ENCODE measurements at regions of chr15 and their contacts with region 1.

Region 1: GRCh38 chr15:67074886-67075229 is 9.5 kb downstream of the SMAD3 start:
- DNase-seq: no peak
- ATAC-seq: no peak
- H3K4me3 ChIP-seq: no peak overlapping the region
- H3K27ac ChIP-seq: peak overlapping the region; percentile 36; the same call in 1 of the 2 replicates
- H3K4me1 ChIP-seq: peaks cover 80% of the 10 kb centered on the region
- H3K27me3 ChIP-seq: no peaks in the 10 kb centered on the region
- CTCF ChIP-seq: no peak

Region 2: GRCh38 chr15:67175643-67176071 is 100.8 kb after region 1 on chr15:
- CTCF ChIA-PET with region 1: no interaction called
- POLR2A ChIA-PET with region 1: no interaction called
- intact Hi-C with region 1: loop called (anchors 1 kb)
- DNase-seq: no peak
- ATAC-seq: no peak
- H3K4me3 ChIP-seq: no peak overlapping the region
- H3K27ac ChIP-seq: peak overlapping the region; percentile 93
- H3K4me1 ChIP-seq: peaks cover 81% of the 10 kb centered on the region
- H3K27me3 ChIP-seq: no peaks in the 10 kb centered on the region
- CTCF ChIP-seq: no peak